Vagina (tissue), 2 donors: ENCODE measurements at regions of chr4 and their contacts with region 1.

Region 1: DNA sequence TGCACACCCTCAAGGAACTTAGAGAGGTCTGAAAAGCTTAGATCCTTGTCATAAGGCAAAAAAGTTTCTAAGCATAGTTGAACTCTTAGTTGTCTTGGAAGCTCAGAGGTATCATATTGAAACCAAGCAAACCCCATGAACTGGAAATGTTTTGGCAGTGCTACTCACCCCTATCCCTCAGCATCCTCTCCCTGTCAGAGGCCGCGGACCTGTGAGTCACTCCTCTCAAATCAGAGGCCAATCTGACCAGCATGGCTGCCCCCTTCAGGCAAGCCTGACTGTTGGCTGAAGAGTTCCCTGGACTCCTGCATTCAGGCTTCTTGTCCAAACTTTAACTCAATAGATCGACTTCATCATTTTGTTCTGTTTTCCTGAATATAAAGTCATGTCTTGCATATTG is 69.4 kb downstream of the KCNIP4 start:
- DNase-seq: no peak
- H3K4me3 ChIP-seq: no peak overlapping the region
- H3K27ac ChIP-seq: no peak overlapping the region
- H3K4me1 ChIP-seq: no peaks in the 10 kb centered on the region
- H3K27me3 ChIP-seq: no peaks in the 10 kb centered on the region
- CTCF ChIP-seq: no peak
- POLR2A ChIP-seq: no peak

Region 2: GRCh38 chr4:21827575-21827974 is 51.6 kb before region 1 on chr4:
- intact Hi-C with region 1: no loop called
- DNase-seq: no peak
- H3K4me3 ChIP-seq: peak overlapping the region in 1 of 2 donors; percentile 9
- H3K27ac ChIP-seq: no peak overlapping the region
- H3K4me1 ChIP-seq: no peaks in the 10 kb centered on the region
- H3K27me3 ChIP-seq: no peaks in the 10 kb centered on the region
- CTCF ChIP-seq: no peak
- POLR2A ChIP-seq: no peak

Region 3: GRCh38 chr4:21921526-21922180 is 42.5 kb after region 1 on chr4:
- intact Hi-C with region 1: loop called (anchors 1 kb)
- DNase-seq: no peak
- H3K4me3 ChIP-seq: no peak overlapping the region
- H3K27ac ChIP-seq: no peak overlapping the region
- H3K4me1 ChIP-seq: no peaks in the 10 kb centered on the region
- H3K27me3 ChIP-seq: no peaks in the 10 kb centered on the region
- CTCF ChIP-seq: no peak
- POLR2A ChIP-seq: no peak

Region 4: GRCh38 chr4:21937689-21938088 is 58.5 kb after region 1 on chr4:
- intact Hi-C with region 1: no loop called
- DNase-seq: no peak
- H3K4me3 ChIP-seq: no peak overlapping the region
- H3K27ac ChIP-seq: no peak overlapping the region
- H3K4me1 ChIP-seq: no peaks in the 10 kb centered on the region
- H3K27me3 ChIP-seq: no peaks in the 10 kb centered on the region
- CTCF ChIP-seq: no peak
- POLR2A ChIP-seq: no peak

Region 5: DNA sequence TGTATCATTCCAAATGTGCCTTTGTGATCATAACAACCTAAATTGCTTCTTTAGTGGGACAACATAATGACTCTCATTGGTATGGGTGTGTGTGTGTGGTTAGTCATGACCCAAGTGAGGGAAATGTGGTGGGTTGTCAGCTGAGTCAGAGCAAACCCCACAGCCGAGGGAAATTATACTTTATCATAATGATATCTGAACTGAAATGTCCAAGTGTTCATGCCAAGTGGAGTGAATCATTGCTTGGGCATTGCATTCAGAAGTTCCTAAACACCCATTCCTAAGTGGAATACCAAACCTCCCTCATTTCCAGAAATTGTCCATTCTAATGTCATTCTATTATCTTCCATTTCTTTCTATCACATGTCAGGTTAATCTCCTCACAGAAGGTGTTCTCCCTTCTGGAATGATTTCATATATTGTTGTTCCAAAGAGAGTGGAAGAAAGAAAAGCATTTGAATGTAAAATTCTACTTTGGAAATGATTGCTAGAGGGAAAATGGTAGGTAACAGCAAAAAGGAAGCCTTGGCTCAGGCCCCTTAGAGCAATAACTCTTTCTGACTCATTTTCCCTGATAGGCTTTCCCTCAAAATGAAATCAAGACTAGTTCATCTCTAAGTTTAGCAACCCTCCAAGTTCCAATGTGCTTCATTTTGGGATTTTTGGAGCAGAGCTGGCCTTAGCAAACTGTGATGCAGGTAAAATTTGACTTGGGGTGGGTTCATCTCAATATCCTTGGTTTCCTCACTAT is 300.1 kb after region 1 on chr4:
- intact Hi-C with region 1: no loop called
- DNase-seq: no peak
- H3K4me3 ChIP-seq: no peak overlapping the region
- H3K27ac ChIP-seq: no peak overlapping the region
- H3K4me1 ChIP-seq: no peaks in the 10 kb centered on the region
- H3K27me3 ChIP-seq: no peaks in the 10 kb centered on the region
- CTCF ChIP-seq: no peak
- POLR2A ChIP-seq: no peak